Kidney (tissue), 22 donors: ENCODE measurements at regions of chr17 and their contacts with region 1.

Region 1: GRCh38 chr17:42843358-42843934 is 934 bp upstream of the AOC2 start:
- DNase-seq: peak in 3 of 5 donors; percentile 62 to 87 (median 79)
- H3K4me3 ChIP-seq: no peak overlapping the region
- H3K27ac ChIP-seq: no peak overlapping the region
- H3K4me1 ChIP-seq: peaks cover 0 to 5% (median 3%) of the 10 kb centered on the region in 3 donors
- H3K27me3 ChIP-seq: no peaks in the 10 kb centered on the region
- CTCF ChIP-seq: peak; percentile 98

Region 2: GRCh38 chr17:42642336-42642735 is 201.1 kb before region 1 on chr17:
- intact Hi-C with region 1: no loop called
- DNase-seq: peak in 1 of 5 donors; percentile 25
- H3K4me3 ChIP-seq: no peak overlapping the region
- H3K27ac ChIP-seq: no peak overlapping the region
- H3K4me1 ChIP-seq: no peaks in the 10 kb centered on the region
- H3K27me3 ChIP-seq: no peaks in the 10 kb centered on the region
- CTCF ChIP-seq: no peak

Region 3: DNA sequence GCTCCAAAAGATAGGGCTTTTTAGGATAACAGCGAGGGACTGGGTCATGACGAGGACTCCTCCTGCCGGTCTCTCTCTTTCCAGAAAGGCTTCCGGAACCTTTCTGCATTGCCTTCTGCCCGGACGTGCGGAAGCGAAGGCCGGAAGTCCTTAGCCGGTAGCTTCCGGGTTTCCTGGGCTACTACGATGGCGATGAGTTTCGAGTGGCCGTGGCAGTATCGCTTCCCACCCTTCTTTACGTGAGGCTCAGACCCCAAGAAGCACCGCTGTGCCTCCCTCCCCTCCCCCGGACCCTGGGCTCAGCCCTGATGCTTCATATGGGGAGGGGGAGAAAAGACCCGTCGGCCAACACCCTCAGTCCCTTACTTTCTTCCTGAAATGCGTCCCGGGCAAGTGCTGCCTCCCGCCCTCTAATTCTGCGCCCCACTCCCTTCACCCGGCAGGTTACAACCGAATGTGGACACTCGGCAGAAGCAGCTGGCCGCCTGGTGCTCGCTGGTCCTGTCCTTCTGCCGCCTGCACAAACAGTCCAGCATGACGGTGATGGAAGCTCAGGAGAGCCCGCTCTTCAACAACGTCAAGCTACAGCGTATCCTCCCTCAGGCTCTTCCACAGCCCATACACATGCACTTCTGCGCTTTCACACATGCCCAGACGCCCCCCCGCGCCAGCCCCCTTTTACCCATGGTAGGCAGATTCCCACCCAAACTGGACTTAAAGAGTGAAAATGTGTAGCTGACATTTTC is 70.0 kb before region 1 on chr17 and contains the start of gene VPS25:
- intact Hi-C with region 1: no loop called
- DNase-seq: peak; percentile 75 to 93 (median 86)
- H3K4me3 ChIP-seq: peak within 1 kb of the TSS; percentile 86 to 99 (median 99)
- H3K27ac ChIP-seq: peak within 1 kb of the TSS; percentile 80 to 89
- H3K4me1 ChIP-seq: peaks cover 0 to 7% (median 5%) of the 10 kb centered on the region in 3 donors
- H3K27me3 ChIP-seq: no peaks in the 10 kb centered on the region
- CTCF ChIP-seq: peak; percentile 5
- total RNA-seq, gene VPS25: 85.2 TPM

Region 4: GRCh38 chr17:42928714-42929496 is 85.5 kb after region 1 on chr17:
- intact Hi-C with region 1: loop called (anchors 5 kb)
- DNase-seq: peak in 4 of 5 donors; percentile 37 to 81 (median 54)
- H3K4me3 ChIP-seq: peak overlapping the region in 1 of 3 donors; percentile 20
- H3K27ac ChIP-seq: peak overlapping the region; percentile 44 to 78
- H3K4me1 ChIP-seq: peaks cover 0 to 8% (median 8%) of the 10 kb centered on the region in 3 donors
- H3K27me3 ChIP-seq: no peaks in the 10 kb centered on the region
- CTCF ChIP-seq: peak; percentile 74

Region 5: DNA sequence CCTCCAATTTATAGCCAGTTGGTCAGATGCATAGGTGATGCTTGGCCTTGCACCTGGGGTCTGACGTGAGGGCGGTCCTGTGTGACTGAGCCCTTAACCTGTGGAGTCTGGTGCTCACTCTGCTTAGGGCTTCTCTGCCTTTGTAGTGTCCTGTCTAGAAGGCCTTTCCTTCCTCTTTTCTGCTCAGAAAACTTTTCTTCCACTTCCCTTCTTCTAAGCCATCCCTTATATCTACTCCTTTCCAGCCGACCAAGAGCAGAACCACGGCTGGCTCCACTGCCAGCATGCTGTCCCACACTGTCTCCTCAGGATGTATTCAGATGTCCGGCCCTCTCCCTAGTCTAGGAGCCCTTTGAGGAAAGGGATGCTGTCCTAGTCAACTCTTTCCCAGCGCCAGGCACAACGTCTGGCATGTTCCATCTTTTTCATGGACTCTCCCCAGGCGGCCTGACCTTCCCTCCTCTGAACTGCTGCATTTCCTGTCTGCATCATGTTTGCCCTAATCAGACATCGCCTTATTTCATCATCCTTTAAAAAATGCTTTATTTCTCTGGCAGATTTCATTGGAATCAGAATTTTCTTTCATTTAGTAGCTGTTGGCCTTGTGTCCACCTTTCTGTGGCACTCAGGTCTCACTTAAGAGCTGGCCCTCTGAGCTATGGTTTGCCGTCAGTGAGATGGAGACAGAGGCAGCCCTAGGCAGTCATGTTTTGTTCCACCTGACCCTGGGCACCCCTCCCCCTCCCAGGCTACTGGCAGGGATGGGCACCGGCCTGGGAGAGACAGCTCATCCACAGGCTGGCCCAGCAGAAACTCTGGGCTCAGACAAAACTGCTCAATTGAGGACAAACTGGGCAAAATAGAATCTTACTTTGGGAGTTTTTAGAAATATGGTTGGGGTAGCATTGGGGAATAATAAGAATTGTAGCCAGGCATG is 297.2 kb after region 1 on chr17:
- intact Hi-C with region 1: no loop called
- DNase-seq: no peak
- H3K4me3 ChIP-seq: no peak overlapping the region
- H3K27ac ChIP-seq: no peak overlapping the region
- H3K4me1 ChIP-seq: no peaks in the 10 kb centered on the region
- H3K27me3 ChIP-seq: no peaks in the 10 kb centered on the region
- CTCF ChIP-seq: no peak